Activated CD4-positive, alpha-beta T cell treated with anti-CD3 and anti-CD28 coated beads for 36 hours (primary cell): ENCODE measurements at regions of chr9 and their contacts with region 1.

Region 1: GRCh38 chr9:93302551-93303257 is 118.8 kb downstream of the WNK2 start:
- DNase-seq: peak; percentile 78
- ATAC-seq: peak; percentile 88
- H3K4me3 Mint-ChIP-seq: no peak overlapping the region
- H3K27ac Mint-ChIP-seq: no peak overlapping the region
- H3K4me1 Mint-ChIP-seq: no peaks in the 10 kb centered on the region
- H3K27me3 Mint-ChIP-seq: no peaks in the 10 kb centered on the region

Region 2: DNA sequence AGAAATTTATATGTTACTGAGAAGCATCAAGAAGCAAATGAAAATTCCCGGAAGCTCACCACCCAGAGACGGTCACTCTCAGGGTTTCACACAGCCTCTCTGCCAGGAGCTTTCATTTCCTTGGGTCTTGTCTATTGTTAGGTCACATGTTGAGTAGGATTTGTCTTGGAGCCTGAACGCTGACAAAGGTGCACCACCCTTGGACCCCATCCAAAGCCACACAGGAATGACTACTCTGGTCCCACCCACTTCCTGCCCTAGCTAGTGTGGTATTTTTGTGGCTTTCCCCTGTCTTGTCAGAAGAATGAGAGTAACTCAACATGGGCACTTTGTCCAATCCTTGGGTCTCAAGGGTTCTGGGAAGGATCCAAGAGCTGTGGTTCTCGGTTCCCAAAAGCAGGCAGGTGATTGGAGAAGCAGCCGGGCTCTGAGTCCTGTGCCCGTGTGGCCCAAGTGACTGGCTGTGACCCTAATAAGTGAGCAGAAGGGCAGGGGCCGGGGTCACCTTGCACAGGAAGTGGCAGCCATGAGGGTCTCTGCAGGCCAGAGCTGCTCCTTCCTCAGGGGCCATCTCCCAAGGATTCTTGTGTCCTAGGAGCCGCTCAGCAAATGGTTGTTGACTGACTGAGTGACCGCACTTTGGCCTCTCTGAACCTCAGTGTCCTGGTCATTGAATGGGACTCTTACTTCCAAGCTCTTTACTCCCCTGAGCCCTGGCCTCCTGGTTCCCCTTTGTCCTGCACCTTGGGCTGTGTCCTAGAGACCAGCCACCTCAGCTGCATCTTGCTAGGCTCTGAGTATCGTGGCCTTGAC is 348.4 kb before region 1 on chr9:
- CTCF ChIA-PET with region 1: interaction called, 3 read pairs
- POLR2A ChIA-PET with region 1: no interaction called
- intact Hi-C with region 1: loop called in 1 of 2 experiments (anchors 2 kb)
- DNase-seq: peak; percentile 89
- ATAC-seq: peak; percentile 85
- H3K4me3 Mint-ChIP-seq: peak overlapping the region; percentile 66
- H3K27ac Mint-ChIP-seq: peak overlapping the region; percentile 97
- H3K4me1 Mint-ChIP-seq: peaks cover 78% of the 10 kb centered on the region
- H3K27me3 Mint-ChIP-seq: no peaks in the 10 kb centered on the region

Region 3: GRCh38 chr9:93346231-93347112 is 43.8 kb after region 1 on chr9:
- CTCF ChIA-PET with region 1: no interaction called
- POLR2A ChIA-PET with region 1: no interaction called
- intact Hi-C with region 1: no loop called
- DNase-seq: peak; percentile 30
- ATAC-seq: no peak
- H3K4me3 Mint-ChIP-seq: peak overlapping the region; percentile 51
- H3K27ac Mint-ChIP-seq: no peak overlapping the region
- H3K4me1 Mint-ChIP-seq: peaks cover 3% of the 10 kb centered on the region
- H3K27me3 Mint-ChIP-seq: peaks cover 27% of the 10 kb centered on the region

Region 4: DNA sequence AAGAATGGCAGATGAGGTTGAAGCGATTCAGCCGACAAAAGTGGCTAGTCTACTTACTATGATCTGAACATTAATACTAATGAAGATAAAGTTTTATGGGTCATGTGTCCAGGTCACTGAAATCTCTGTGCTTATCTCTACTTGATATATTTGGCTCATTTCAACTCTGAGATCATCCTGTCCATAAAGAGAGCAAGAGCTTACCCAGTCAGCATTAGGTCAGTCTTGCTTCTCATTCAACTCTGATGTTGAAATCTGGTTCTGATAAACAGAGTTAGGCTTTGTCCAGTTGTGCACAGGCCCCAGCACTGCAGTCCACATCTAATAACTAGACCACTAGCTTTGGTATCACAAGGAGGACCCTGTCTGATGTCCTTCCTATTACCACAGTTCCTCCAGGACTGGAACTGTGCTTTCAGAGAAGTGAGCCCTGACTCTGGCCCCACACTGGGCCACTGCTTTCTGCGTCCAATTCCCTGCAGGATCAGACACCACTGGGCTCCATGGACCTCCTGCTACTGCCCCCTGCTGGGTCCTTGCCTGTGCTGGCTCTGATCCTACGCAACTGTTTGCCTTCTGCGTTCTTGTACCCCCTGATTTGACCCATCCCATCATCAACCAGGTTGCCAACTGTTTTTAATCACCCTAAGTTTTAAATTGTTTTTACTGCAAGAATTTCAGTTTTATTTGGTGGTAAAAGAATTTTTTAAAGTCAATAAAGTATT is 125.1 kb after region 1 on chr9:
- CTCF ChIA-PET with region 1: no interaction called
- POLR2A ChIA-PET with region 1: no interaction called
- intact Hi-C with region 1: no loop called
- DNase-seq: peak; percentile 36
- ATAC-seq: no peak
- H3K4me3 Mint-ChIP-seq: no peak overlapping the region
- H3K27ac Mint-ChIP-seq: no peak overlapping the region
- H3K4me1 Mint-ChIP-seq: no peaks in the 10 kb centered on the region
- H3K27me3 Mint-ChIP-seq: peaks cover 9% of the 10 kb centered on the region